Activated B cell treated with CpG ODN at 0.5 μM for 24 hours (primary cell): ENCODE measurements at regions of chr3 and their contacts with region 1.

Region 1: GRCh38 chr3:144028798-144029411 is 57.3 kb downstream of the DIPK2A start:
- DNase-seq: no peak
- ATAC-seq: peak; percentile 92
- H3K4me3 Mint-ChIP-seq: peak overlapping the region; percentile 44
- H3K27ac Mint-ChIP-seq: peak overlapping the region; percentile 82
- H3K4me1 Mint-ChIP-seq: peaks cover 35% of the 10 kb centered on the region
- H3K27me3 Mint-ChIP-seq: no peaks in the 10 kb centered on the region
- CTCF ChIP-seq: no peak

Region 2: DNA sequence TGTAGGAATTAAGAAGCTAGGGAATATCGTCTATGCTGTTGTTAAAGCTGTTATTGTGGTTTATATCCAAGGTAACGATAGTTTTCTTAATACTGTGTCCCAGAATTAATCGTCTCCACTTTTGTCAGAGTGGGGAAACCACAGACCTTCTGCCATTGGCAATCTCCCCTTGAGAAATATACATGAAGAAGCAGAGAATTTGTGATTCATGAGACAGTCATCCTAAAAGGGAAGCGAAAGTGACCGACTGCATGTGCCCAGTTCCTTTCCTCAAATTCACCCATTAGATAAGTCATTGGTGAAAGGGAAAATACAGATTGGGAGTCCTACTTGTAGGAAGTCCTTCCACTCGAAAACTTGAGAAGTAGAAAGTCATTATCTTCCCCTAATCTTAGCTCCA is 30.6 kb before region 1 on chr3:
- CTCF ChIA-PET with region 1: no interaction called
- POLR2A ChIA-PET with region 1: interaction called, 5 read pairs
- intact Hi-C with region 1: loop called (anchors 2 kb)
- DNase-seq: no peak
- ATAC-seq: peak; percentile 70
- H3K4me3 Mint-ChIP-seq: no peak overlapping the region
- H3K27ac Mint-ChIP-seq: peak overlapping the region; percentile 27
- H3K4me1 Mint-ChIP-seq: peaks cover 24% of the 10 kb centered on the region
- H3K27me3 Mint-ChIP-seq: no peaks in the 10 kb centered on the region
- CTCF ChIP-seq: no peak